ENCODE measurements at regions of chr1 and their contacts with region 1.

Region 1: DNA sequence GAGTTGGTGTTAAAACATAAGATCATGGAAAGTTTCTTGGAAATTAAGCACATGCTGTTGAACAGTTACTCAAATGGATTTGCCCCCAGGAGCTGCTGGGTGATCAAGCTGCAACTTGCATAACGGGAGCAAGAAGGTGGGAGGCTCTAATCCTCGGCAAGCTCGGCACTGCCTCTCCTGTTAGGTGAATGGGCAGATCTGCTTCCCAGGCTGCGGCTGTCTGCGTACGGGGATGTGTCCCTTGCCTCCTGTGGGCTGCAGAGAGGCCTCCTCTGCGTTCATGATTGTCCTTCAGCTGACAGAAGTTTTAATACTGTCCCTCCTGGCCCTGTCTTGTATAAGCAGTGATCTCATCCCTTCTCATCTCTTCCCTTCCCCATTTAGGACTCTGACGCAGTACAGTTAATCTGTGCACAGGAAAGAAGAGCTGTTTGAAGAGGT is 36.7 kb downstream of the ATP1A1 start:
- DNase-seq: peak; percentile 74
- H3K4me3 ChIP-seq: no peak overlapping the region
- H3K27ac ChIP-seq: no peak overlapping the region
- H3K4me1 ChIP-seq: peaks cover 40% of the 10 kb centered on the region
- H3K27me3 ChIP-seq: no peaks in the 10 kb centered on the region
- CTCF ChIP-seq: no peak

Region 2: GRCh38 chr1:116325922-116326321 is 83.8 kb before region 1 on chr1:
- CTCF ChIA-PET with region 1: no interaction called
- dilution Hi-C with region 1: loop called (anchors 5 kb)
- in situ Hi-C with region 1: no loop called
- intact Hi-C with region 1: no loop called
- DNase-seq: no peak
- H3K4me3 ChIP-seq: no peak overlapping the region
- H3K27ac ChIP-seq: no peak overlapping the region
- H3K4me1 ChIP-seq: no peaks in the 10 kb centered on the region
- H3K27me3 ChIP-seq: no peaks in the 10 kb centered on the region
- CTCF ChIP-seq: no peak

Region 3: DNA sequence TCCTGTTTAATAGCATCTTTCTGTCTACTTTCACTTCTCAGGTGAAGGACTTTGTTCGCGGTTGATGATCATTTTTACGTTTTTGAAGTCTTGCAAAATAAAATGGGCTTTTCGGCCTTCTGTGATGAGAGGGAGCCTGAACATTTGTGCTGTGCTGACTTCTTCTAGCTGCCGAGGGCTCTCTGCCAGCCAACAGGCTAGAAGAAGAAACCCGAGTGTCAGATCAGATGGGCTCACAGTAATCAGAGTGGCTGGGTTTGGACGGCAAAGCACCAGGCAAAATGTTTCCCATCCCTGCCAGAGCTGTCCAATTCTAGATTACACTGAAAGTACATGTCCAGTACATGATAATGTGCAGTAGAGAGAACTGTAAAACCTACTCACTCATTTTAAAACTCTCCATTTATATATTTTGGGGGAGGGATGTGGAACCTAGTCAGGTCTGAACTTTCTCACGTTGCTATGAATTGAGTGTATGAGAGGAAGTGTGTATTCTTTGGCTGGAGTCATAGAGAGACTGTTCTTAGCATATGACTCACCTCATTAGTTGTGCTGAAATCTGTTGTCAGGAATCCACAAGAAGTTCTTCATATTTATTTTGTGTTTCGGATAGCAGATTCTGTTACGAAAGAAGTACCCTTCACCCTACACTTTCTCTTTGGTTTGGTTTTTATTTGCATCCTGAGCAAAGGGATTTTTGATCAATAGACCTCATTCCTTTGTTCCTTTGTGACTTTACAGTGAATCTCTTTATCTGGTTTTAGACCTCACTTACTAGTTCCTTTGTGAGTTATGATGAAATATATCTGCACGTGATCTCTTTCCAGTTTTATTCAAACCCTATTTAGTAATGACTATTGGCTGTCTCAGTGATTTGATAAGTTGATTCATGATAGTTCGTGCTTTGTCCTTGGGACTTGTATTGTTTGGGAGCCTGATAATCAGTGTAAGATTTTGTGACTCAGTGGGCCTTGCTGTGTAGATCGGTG is 31.9 kb before region 1 on chr1:
- CTCF ChIA-PET with region 1: no interaction called
- dilution Hi-C with region 1: no loop called
- in situ Hi-C with region 1: no loop called
- intact Hi-C with region 1: loop called (anchors 2 kb)
- DNase-seq: peak; percentile 92
- H3K4me3 ChIP-seq: peak overlapping the region; percentile 23 to 37 (median 31)
- H3K27ac ChIP-seq: peak overlapping the region; percentile 95
- H3K4me1 ChIP-seq: peaks cover 53% of the 10 kb centered on the region
- H3K27me3 ChIP-seq: no peaks in the 10 kb centered on the region
- CTCF ChIP-seq: no peak

Region 4: GRCh38 chr1:116433275-116434257 is 23.8 kb after region 1 on chr1:
- CTCF ChIA-PET with region 1: no interaction called
- dilution Hi-C with region 1: no loop called
- in situ Hi-C with region 1: no loop called
- intact Hi-C with region 1: loop called (anchors 1 kb)
- DNase-seq: peak; percentile 94
- H3K4me3 ChIP-seq: no peak overlapping the region
- H3K27ac ChIP-seq: peak overlapping the region; percentile 81
- H3K4me1 ChIP-seq: peaks cover 20% of the 10 kb centered on the region
- H3K27me3 ChIP-seq: no peaks in the 10 kb centered on the region
- CTCF ChIP-seq: no peak

Region 5: GRCh38 chr1:116472431-116472961 is 62.7 kb after region 1 on chr1:
- CTCF ChIA-PET with region 1: no interaction called
- dilution Hi-C with region 1: loop called (anchors 10 kb)
- in situ Hi-C with region 1: no loop called
- intact Hi-C with region 1: no loop called
- DNase-seq: no peak
- H3K4me3 ChIP-seq: no peak overlapping the region
- H3K27ac ChIP-seq: no peak overlapping the region
- H3K4me1 ChIP-seq: no peaks in the 10 kb centered on the region
- H3K27me3 ChIP-seq: no peaks in the 10 kb centered on the region
- CTCF ChIP-seq: no peak

Region 6: GRCh38 chr1:116521186-116521585 is 111.4 kb after region 1 on chr1:
- CTCF ChIA-PET with region 1: no interaction called
- dilution Hi-C with region 1: no loop called
- in situ Hi-C with region 1: no loop called
- intact Hi-C with region 1: no loop called
- DNase-seq: no peak
- H3K4me3 ChIP-seq: no peak overlapping the region
- H3K27ac ChIP-seq: no peak overlapping the region
- H3K4me1 ChIP-seq: no peaks in the 10 kb centered on the region
- H3K27me3 ChIP-seq: no peaks in the 10 kb centered on the region
- CTCF ChIP-seq: no peak

Measured in mammary epithelial cell (primary cell).